ENCODE measurements at regions of chr3 and their contacts with region 1.

Region 1: GRCh38 chr3:48268381-48269183 is 27.7 kb downstream of the ZNF589 start:
- DNase-seq: peak; percentile 90
- ATAC-seq: peak; percentile 98
- H3K4me3 Mint-ChIP-seq: peak overlapping the region; percentile 25
- H3K27ac Mint-ChIP-seq: peak overlapping the region; percentile 76
- H3K4me1 Mint-ChIP-seq: peaks cover 33% of the 10 kb centered on the region
- H3K27me3 Mint-ChIP-seq: no peaks in the 10 kb centered on the region

Region 2: DNA sequence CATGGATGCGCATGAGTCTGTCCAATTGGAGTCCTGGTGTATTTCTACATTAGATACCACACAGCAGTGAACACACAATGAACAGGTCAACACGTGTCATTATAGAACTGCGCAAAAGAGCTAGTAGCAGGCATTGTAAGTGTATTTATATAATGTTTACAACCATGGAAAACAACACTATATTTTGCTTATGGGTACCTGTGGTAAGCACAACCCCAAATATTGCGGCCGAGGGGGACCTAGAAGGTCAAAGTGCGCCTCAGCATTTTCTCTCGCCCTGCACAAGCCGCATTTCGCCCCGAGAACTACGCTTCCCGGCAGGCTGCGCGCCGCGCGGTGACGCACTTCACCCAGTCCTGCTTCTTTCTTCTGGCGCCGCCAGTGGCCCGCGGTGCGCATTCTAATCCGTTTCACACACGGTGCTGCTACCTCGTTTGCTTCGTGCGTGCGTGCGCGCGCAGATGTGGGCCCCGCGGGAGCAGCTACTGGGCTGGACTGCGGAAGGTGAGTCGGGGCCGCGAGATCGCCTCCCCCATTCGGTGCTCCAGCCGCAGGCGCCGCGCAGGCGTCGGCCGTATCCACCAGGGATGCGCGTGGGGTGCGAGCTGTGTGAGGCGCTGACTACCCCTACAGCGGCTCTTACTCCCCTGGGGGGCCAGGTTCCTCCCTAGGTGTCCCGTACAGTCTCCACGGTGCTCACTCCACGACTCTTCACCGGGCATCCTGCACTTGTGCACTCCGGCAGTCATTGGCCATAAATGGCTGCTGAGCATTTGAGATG is 27.7 kb before region 1 on chr3 and contains the start of gene ZNF589:
- CTCF ChIA-PET with region 1: interaction called, 14 read pairs
- DNase-seq: peak; percentile 98
- ATAC-seq: peak; percentile 99
- H3K4me3 Mint-ChIP-seq: peak within 1 kb of the TSS; percentile 87
- H3K27ac Mint-ChIP-seq: peak within 1 kb of the TSS; percentile 92
- H3K4me1 Mint-ChIP-seq: peaks cover 34% of the 10 kb centered on the region
- H3K27me3 Mint-ChIP-seq: no peaks in the 10 kb centered on the region
- total RNA-seq, gene ZNF589: 25.3 to 36.3 TPM

Measured in activated CD8-positive, alpha-beta memory T cell treated with anti-CD3 and anti-CD28 coated beads, Interleukin-2, amount 10 ng/mL, durations not matched to agents 7 days and 5 days (primary cell).